Right lobe of liver (tissue), 6 donors: ENCODE measurements at regions of chr10 and their contacts with region 1.

Region 1: DNA sequence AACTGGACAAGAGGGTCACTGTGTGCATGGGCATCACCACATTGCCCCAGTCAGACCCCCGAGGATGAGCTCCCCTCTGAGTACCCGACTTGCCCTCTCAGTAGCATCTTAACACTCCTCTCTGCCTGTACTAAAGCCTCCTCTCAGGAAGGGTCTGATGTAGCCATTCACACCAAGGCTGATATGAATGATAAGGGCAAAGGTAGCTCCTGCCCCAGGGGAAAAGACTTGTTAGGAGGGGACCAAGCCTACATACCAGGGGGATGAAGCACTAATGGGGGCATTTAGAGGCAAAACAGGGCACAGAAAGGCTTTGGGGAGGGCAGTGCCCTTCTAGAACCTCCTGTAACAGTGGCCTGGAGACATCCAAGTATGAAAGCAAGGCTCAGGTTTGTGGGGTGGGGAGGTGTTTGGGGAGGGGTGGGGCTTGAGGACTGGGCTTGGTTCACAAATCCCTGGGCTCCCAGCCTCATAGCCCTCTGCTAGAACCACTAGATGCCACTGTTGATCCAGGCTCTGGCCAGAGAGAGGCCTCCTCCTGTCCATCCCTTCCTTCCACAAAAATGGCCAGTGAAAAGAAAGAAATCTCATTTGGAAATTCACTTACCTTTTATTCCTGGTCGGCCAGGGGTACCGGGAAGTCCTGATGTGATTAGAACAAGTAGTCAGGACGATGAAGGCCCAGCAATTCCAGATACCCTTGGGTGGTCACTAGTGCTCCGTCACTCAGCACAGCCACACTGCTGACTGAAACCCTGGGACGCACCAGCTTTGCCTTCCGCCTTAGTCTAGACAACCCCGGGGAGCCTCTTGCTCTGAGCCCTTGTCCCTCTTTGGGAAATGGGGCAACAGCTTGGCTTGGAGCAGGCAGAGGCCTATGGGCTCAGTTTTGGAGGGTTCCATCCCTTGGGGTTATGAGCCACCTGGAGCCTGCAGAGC is 40.3 kb downstream of the COL17A1 start:
- DNase-seq: peak in 2 of 3 donors; percentile 47 to 66
- ATAC-seq: peak; percentile 87 to 99 (median 93)
- H3K4me3 ChIP-seq: no peak overlapping the region
- H3K27ac ChIP-seq: no peak overlapping the region
- H3K4me1 ChIP-seq: no peaks in the 10 kb centered on the region
- H3K27me3 ChIP-seq: no peaks in the 10 kb centered on the region
- CTCF ChIP-seq: peak; percentile 54 to 70 (median 68)
- POLR2A ChIP-seq: no peak

Region 2: GRCh38 chr10:103659674-103660363 is 385.6 kb before region 1 on chr10:
- intact Hi-C with region 1: no loop called
- DNase-seq: peak; percentile 70 to 89 (median 85)
- ATAC-seq: peak; percentile 82 to 91 (median 86)
- H3K4me3 ChIP-seq: peak overlapping the region; percentile 42 to 81 (median 65)
- H3K27ac ChIP-seq: peak overlapping the region; percentile 37 to 94 (median 92)
- H3K4me1 ChIP-seq: peaks cover 0 to 54% (median 11%) of the 10 kb centered on the region in 4 donors
- H3K27me3 ChIP-seq: no peaks in the 10 kb centered on the region
- CTCF ChIP-seq: peak in 1 of 4 donors; percentile 15
- POLR2A ChIP-seq: peak; percentile 77

Region 3: DNA sequence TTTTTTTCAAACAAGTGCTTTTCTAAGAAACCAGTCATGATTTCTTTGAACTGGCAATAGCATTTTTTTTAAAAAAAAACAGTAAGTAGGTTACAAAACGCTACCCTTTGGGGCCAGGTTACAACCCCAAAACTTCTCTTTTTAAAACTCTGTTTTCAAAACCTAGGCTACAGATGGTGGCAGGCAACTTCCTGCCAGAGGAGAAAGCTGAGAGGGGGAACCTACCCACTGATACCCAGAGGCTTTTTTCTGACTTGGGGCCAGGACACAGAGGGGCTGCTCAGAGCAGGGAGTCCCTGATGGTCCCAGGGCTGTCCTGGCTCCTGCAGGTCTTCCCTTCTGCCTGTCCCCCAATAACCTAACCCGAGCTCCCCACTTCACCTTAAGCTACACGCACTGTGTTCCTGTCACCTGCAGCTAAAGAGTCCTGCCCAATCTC is 134.4 kb before region 1 on chr10:
- intact Hi-C with region 1: no loop called
- DNase-seq: no peak
- ATAC-seq: peak in 2 of 4 donors; percentile 33 to 36
- H3K4me3 ChIP-seq: no peak overlapping the region
- H3K27ac ChIP-seq: peak overlapping the region in 1 of 3 donors; percentile 19
- H3K4me1 ChIP-seq: peaks cover 0 to 10% (median 4%) of the 10 kb centered on the region in 4 donors
- H3K27me3 ChIP-seq: no peaks in the 10 kb centered on the region
- CTCF ChIP-seq: no peak
- POLR2A ChIP-seq: no peak

Region 4: DNA sequence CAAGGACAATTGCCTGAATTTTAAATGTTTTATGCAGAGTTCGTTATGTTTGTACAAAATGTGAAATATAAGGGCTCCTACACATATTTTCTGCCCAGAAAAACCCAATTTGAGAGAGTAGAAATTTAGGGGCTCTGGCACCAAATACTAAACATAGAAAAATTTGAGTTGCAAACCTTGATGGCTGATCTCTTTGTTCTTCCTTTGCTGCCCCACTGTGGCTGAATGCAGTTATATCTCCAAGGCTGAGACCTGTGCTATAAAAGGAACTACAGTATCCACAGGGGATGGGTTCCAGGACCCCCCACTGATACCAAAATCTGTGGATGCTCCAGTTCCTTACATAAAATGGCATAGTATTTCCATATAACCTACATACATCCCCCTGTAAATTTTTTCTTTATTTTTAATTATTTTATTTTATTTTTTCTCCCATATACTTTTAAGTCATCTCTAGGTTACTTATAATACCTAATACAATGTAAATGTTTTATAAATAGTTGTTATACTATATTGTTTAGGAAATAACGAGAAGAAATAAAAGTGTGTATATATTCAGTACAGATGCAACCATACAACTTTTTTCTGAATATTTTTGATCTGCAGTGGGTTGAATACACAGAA is 164.3 kb after region 1 on chr10:
- intact Hi-C with region 1: loop called in 1 of 2 experiments (anchors 10 kb)
- DNase-seq: no peak
- ATAC-seq: peak; percentile 73 to 84 (median 74)
- H3K4me3 ChIP-seq: no peak overlapping the region
- H3K27ac ChIP-seq: no peak overlapping the region
- H3K4me1 ChIP-seq: no peaks in the 10 kb centered on the region
- H3K27me3 ChIP-seq: no peaks in the 10 kb centered on the region
- CTCF ChIP-seq: peak; percentile 59 to 65 (median 62)
- POLR2A ChIP-seq: no peak